Upper lobe of right lung (tissue), 1 donor: ENCODE measurements at regions of chr3 and their contacts with region 1.

Region 1: DNA sequence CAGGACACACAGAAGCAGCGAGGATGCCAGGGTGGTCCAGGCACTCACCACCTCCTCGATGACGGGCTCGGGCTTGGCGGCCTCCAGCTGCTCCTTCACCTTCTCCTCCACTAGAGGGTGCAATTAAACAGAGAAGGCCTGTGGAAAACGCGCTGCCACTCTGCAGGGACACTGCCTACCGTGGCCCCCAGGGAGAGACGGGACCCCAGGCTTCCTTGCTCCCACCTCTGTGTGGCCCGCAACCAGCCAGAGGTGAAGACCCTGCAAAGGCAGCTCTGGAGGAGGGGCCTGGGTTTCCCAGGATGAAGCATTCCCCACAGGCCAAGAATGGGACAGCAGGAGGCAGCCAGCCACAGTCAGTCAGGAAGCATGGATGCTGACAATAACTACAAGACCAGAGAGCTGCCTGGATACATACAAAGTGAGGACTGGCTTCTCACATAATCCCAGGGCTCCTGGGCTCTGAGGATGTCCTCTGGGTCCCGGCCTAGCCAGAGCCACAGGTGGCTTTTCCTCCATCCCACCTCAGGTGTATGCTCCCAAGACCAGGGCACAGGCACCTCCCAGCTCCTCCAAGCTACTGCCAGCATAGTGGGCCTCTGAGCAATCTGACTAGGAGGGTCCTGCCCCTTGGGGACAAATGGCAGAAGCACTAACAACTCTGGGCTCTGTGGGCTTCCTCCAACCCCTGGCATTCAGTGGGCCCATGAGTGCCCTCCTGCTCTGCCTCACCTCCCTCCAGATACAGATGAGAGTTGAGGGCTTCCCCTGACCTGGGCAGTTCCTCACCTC is 46.2 kb downstream of the PTH1R start:
- DNase-seq: peak; percentile 72
- ATAC-seq: peak; percentile 56
- H3K4me3 ChIP-seq: no peak overlapping the region
- H3K27ac ChIP-seq: no peak overlapping the region
- H3K4me1 ChIP-seq: peaks cover 32% of the 10 kb centered on the region
- H3K27me3 ChIP-seq: no peaks in the 10 kb centered on the region
- CTCF ChIP-seq: peak; percentile 64

Region 2: DNA sequence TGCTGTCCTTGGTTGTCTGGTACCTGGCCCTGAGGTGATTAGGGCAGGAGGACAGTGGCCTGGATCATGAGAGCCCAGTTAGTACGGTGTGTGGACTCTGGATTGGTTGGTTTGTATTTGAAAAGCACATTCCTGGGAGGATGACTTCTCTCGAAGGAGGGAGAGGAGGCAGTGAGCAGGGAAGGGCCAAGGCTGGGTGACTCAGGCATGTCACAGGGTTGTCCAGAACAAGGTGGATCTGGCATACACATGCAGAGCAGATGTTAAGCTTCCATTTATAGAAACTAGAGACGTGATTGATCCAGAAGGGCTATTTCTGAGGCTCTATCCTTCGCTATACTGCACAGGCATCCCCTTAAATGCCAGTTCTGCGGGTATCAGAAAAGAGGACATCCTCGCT is 277.1 kb before region 1 on chr3:
- intact Hi-C with region 1: no loop called
- DNase-seq: no peak
- ATAC-seq: no peak
- H3K4me3 ChIP-seq: no peak overlapping the region
- H3K27ac ChIP-seq: no peak overlapping the region
- H3K4me1 ChIP-seq: no peaks in the 10 kb centered on the region
- H3K27me3 ChIP-seq: no peaks in the 10 kb centered on the region
- CTCF ChIP-seq: no peak

Region 3: GRCh38 chr3:46845791-46846623 is 77.7 kb before region 1 on chr3:
- intact Hi-C with region 1: no loop called
- DNase-seq: peak; percentile 92
- ATAC-seq: peak; percentile 92
- H3K4me3 ChIP-seq: peak overlapping the region; percentile 51
- H3K27ac ChIP-seq: peak overlapping the region; percentile 82
- H3K4me1 ChIP-seq: peaks cover 12% of the 10 kb centered on the region
- H3K27me3 ChIP-seq: no peaks in the 10 kb centered on the region
- CTCF ChIP-seq: peak; percentile 64

Region 4: DNA sequence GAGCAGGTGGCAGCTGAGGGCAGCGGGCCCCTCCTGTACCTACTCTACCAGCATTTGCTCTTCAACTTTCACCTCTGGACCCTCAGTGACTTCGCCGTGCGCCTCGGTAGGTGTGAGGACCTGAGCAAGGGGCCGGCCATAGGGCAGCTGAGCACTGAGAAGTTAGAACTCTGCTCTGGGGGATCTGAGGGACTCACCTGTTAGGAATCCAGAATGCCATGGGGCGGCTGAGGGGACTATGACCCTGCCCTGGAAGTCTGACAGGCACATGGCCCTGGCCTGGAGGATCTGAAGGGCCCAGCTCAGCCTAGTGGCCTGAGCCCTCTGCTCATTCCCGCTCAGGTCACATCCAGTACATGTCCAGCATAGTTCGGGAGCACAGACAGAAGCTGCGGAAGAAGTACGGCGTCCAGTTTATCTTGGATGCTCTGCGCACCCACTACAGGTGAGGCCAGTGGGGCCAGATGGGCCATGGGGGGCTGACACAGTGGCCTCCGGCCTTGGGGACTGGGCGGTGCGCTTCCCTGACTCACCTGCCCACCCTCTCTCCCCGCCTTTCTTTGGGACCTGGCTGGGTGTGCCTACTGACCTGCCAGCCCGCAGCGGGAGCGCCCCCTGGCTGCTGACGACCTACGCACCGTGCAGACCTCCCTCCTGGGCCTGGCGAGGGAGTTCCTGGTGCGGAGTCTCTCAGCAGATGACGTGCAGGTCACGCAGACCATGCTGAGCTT is 74.5 kb after region 1 on chr3:
- intact Hi-C with region 1: loop called (anchors 5 kb)
- DNase-seq: peak; percentile 91
- ATAC-seq: peak; percentile 79
- H3K4me3 ChIP-seq: no peak overlapping the region
- H3K27ac ChIP-seq: no peak overlapping the region
- H3K4me1 ChIP-seq: no peaks in the 10 kb centered on the region
- H3K27me3 ChIP-seq: no peaks in the 10 kb centered on the region
- CTCF ChIP-seq: peak; percentile 81